Posterior cingulate gyrus (tissue), 11 donors: ENCODE measurements at regions of chr10 and their contacts with region 1.

Region 1: DNA sequence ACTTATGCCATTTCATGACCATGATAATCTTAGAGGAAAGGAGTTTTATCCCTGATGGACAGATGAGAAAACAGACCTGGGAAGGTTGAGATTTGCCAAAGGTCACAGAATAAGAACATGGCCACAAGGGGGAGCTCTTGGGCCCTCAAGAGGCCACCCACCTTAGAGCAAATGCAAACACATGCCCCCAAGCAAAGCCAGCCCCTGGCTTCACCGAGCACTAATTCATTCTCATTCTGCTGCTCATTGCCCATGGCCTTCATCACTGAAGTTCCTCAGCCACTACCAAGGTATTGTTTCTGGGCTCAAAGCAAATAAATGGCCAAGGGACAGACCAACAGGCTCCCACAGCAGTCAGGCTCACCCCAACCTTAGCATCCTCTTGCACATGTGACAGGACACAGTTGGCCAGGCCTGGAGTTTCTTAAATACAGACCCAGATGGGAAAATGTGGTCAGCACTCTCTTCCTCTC is 44.2 kb downstream of the PDLIM1 start:
- DNase-seq: peak in 5 of 10 donors; percentile 43 to 86 (median 52)

Region 2: DNA sequence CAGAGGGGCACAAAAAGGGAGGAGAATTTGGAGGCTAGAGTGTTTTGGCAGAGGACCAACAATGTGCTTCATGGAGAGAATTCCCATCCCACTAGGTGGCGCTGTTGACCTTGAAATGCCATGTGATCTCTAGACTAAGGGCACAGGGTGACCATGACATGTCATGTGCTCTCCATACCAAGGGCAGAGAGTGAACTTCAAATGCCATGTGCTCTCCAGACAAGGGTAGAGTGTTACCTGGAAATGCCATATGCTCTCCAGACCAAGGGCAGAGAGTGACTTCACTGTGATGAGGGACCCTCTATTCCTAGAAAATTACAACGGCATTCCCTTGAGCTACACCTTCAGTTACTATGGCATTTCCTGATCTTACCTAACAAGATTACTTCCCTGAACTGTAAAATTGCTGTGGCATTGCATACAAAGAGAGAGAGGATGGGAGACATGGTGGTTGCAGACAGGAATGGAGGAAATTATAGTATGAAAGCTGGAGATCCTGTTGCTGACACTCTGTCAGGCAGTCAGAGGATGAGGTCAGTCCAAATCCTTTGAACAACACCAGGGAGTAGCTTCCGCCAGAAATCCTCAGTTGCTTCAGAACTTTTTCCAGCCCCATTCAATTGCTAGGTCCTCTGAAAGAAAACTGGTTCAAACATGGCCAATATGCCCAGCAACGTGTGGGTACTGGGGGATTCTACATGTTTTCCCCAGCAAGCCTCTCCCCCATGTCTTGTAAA is 113.4 kb before region 1 on chr10:
- intact Hi-C with region 1: loop called (anchors 2 kb)
- DNase-seq: peak in 5 of 10 donors; percentile 19 to 57 (median 34)

Region 3: DNA sequence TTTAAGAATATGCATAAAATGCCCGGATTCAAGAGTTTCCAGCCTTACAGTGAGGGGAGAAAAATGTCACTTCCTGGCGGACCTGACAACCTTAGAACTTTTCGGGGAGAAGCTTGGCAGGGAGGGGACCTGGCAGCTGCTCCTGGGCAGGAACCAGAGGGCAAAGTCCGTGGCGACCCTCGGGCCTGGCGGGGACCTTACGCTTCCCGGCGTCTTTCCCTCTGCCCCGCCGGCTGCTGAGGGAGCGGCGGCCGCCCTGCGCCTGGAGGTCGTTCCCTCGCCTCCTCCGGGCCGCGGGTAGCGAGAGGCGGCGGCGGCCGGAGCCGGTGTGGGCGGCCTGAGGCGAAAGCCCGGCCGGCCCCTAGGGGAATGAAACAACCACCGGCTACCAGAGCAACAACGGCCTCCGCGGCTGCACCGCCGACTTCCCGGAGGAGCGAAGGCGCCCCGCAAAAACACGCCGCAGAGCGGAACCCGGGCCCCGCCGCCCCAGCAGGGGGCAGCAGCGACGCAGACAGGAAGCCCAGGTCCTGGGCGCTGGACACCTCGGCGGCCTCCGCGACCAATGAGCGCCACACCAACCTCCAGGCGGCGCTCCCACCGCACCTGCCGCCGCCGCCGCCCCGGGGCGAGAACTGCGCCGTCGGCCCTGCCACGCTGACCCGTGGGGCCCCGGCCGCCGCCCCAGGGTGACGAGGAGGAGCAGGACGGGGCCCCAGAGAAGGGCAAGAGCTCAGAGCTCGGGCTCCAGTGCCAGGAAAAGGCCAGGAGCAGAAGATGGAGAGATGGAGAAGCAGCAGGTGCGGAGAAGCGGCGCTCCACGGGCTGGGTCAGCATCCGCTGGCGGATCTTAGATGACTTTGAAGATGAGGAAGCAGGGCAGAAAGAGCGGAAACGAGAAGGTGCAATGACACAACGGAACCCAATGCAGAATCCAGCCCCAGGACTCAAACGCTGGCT is 63.1 kb before region 1 on chr10:
- intact Hi-C with region 1: loop called (anchors 1 kb)
- DNase-seq: peak; percentile 59 to 96 (median 76)

Region 4: GRCh38 chr10:95363303-95363912 is 116.8 kb after region 1 on chr10:
- intact Hi-C with region 1: loop called (anchors 2 kb)
- DNase-seq: peak in 2 of 10 donors; percentile 23 to 40

Region 5: GRCh38 chr10:95400787-95401186 is 154.2 kb after region 1 on chr10:
- intact Hi-C with region 1: no loop called
- DNase-seq: peak in 4 of 10 donors; percentile 45 to 90 (median 70)

Region 6: DNA sequence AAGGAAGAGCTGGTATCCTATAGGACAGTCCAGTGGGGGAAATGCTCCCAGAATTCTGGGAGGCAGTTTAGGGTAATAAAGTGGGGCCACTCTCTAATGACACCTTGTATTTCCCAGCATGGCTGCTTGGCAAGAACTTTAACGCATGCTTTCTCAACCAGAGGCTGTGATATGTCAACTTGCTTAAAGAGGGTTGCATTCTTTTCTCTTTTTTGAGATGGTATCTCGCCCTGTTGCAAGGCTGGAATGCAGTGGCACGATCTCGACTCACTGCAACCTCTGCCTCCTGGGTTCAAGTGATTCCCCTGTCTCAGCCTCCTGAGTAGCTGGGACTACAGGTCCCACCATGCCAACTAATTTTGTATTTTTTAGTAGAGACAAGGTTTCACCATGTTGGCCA is 371.5 kb after region 1 on chr10:
- intact Hi-C with region 1: no loop called
- DNase-seq: no peak